Heart left ventricle (tissue), 16 donors: ENCODE measurements at regions of chr2 and their contacts with region 1.

Region 1: DNA sequence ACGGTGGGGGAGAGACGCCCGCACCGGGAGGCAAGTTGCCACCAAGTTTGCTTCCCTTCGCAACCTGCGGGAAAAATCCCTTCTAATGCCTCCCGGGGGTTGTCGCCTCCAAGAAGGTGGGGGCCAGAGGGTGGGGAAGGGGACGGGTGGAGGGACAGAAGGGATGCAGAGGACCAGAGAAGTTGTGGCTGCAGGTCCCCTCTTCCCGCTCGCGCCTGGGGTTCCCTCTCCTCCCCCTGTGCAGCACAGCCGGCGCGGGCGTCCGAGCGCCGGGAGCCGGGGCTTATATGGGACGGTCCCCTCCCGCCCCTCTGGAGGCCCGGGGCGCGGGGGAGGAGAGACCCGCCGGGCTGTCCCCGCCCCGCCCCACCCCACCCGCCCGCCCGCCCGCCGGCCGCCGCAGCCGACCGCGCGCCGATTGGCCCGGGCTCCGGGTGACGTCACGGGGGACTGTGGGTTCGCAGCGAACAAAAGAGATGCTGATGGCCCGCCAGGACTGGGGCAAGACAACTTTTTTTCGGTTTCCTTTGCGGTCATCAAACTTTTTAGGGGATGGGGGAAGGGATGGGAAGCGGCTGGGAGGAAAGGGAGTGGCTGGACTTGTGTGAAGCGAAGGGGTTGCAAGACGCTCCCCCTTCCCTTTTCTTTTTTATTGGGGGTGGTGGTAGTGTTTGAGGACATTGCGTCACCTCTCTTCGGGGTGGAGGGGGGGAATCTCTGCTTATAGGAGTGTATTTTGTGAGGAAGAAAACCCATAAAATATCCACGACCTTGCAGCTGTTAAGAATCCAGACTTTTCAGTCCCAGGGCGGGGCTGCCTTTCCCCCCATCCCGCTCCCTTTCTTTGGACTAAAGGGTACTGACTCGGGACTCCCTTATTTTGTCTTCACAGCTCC is at the start of gene FN1:
- DNase-seq: peak; percentile 93 to 95 (median 94)
- ATAC-seq: peak; percentile 84 to 95 (median 89)
- H3K4me3 ChIP-seq: peak within 1 kb of the TSS; percentile 39 to 90 (median 64)
- H3K27ac ChIP-seq: peak within 1 kb of the TSS; percentile 81 to 99 (median 91)
- H3K4me1 ChIP-seq: peaks cover 0 to 41% (median 7%) of the 10 kb centered on the region in 12 donors
- H3K27me3 ChIP-seq: peaks cover 0 to 33% (median 0%) of the 10 kb centered on the region in 9 donors
- CTCF ChIP-seq: no peak
- POLR2A ChIP-seq: peak in 1 of 2 donors; percentile 68
- total RNA-seq, gene FN1: 118 to 1,418 (median 343) TPM

Region 2: DNA sequence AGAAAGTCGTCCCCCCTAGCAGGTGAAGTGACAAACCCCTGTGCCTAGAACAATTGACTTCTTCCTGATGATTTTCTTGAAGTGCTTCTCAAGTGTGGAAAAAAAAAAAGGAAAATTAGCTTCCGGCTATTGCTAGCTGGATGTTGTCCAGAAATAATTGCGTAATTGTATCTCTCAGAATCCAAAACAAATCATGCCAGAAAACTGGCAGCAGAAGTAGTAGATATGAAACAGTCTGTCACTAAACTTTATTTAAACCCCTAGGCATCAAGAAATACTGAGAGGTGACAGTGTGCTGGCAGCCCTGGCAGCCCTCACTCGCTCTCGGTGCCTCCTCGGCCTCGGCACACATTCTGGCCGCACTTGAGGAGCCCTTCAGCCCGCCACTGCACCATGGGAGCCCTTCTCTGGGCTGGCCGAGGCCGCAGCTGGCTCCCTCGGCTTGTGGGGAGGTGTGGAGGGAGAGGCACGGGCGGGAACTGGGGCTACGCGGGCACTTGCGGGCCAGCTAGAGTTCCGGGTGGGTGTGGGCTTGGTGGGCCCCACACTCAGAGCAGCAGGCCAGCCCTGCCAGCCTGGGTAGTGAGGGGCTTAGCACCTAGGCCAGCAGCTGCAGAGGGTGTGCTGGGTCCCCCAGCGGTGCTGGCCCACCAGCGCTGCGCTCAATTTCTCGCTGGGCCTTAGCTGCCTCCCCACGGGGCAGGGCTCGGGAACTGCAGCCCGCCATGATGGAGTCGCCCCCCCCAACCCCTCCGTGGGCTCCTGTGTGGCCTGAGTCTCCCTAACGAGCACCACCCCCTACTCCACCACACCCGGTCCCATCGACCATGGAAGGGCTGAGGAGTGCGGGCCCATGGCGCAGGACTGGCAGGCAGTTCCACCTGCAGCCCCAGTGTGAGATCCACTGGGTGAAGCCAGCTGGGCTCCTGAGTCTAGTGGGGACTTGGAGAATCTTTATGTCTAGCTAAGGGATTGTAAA is 217.2 kb before region 1 on chr2:
- intact Hi-C with region 1: no loop called
- DNase-seq: peak in 1 of 5 donors; percentile 21
- ATAC-seq: no peak
- H3K4me3 ChIP-seq: no peak overlapping the region
- H3K27ac ChIP-seq: no peak overlapping the region
- H3K4me1 ChIP-seq: no peaks in the 10 kb centered on the region
- H3K27me3 ChIP-seq: no peaks in the 10 kb centered on the region
- CTCF ChIP-seq: no peak
- POLR2A ChIP-seq: no peak

Region 3: DNA sequence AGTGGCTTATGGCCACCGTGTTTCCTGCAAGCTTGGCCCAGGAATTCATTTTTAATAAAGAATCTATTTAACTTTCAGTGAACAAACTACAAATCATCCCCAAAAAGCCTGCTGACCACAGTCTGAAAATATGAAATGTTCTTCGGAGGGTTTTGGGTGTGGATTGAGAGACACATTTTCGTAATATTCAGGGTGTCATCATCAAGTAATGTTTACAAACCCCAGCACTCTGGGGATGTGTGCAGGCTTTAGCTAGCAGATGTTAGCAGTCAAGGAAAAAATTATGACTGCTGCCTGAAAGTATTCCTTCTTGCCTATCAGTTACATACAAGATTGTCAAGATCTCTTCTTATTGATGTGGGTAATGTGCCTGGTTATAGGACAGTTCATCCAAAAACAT is 143.8 kb after region 1 on chr2:
- intact Hi-C with region 1: loop called in 1 of 10 experiments (anchors 10 kb)
- DNase-seq: peak in 1 of 5 donors; percentile 30
- ATAC-seq: peak; percentile 77 to 95 (median 88)
- H3K4me3 ChIP-seq: no peak overlapping the region
- H3K27ac ChIP-seq: peak overlapping the region in 4 of 12 donors; percentile 15 to 32 (median 24)
- H3K4me1 ChIP-seq: peaks cover 0 to 4% (median 0%) of the 10 kb centered on the region in 12 donors
- H3K27me3 ChIP-seq: no peaks in the 10 kb centered on the region
- CTCF ChIP-seq: no peak
- POLR2A ChIP-seq: no peak

Region 4: GRCh38 chr2:215609089-215610032 is 173.3 kb after region 1 on chr2:
- intact Hi-C with region 1: loop called in 1 of 10 experiments (anchors 10 kb)
- DNase-seq: no peak
- ATAC-seq: no peak
- H3K4me3 ChIP-seq: no peak overlapping the region
- H3K27ac ChIP-seq: no peak overlapping the region
- H3K4me1 ChIP-seq: peaks cover 0 to 16% (median 0%) of the 10 kb centered on the region in 12 donors
- H3K27me3 ChIP-seq: no peaks in the 10 kb centered on the region
- CTCF ChIP-seq: no peak
- POLR2A ChIP-seq: no peak

Region 5: GRCh38 chr2:215828517-215829184 is 392.6 kb after region 1 on chr2:
- intact Hi-C with region 1: loop called in 1 of 10 experiments (anchors 10 kb)
- DNase-seq: peak in 3 of 5 donors; percentile 26 to 42 (median 32)
- ATAC-seq: no peak
- H3K4me3 ChIP-seq: no peak overlapping the region
- H3K27ac ChIP-seq: no peak overlapping the region
- H3K4me1 ChIP-seq: peaks cover 0 to 47% (median 5%) of the 10 kb centered on the region in 12 donors
- H3K27me3 ChIP-seq: no peaks in the 10 kb centered on the region
- CTCF ChIP-seq: peak in 11 of 12 donors; percentile 16 to 63 (median 43)
- POLR2A ChIP-seq: no peak